Panc1 (cell line): ENCODE measurements at regions of chr17 and their contacts with region 1.

Region 1: DNA sequence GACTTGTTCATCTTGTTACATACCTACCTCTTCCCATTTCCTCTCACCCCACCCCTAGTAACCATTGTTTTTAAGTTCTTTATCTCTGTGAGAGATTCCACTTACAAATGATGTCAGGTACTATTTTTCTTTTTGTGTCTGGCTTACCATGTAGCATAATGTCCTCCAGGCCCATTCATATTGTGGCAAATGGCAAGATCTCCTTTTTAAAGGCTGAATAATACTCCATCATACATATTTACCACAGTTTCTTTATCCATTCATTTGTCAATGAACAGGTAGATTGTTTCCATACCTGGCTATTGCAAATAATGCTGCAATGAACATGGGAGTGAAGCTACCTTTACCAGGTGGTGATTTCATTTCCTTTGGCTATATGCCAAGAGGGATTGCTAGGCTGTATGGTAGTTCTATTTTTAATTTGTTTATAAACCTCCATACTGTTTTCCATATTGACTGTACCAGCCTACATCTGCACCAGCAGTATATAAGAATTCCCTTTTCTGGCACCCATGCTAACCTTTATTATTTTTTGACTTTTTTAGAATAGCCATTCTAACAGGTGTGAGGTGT is 53.9 kb downstream of the NSRP1 start:
- DNase-seq: no peak
- ATAC-seq: no peak
- H3K4me3 ChIP-seq: no peak overlapping the region
- H3K27ac ChIP-seq: no peak overlapping the region
- H3K4me1 ChIP-seq: no peaks in the 10 kb centered on the region
- H3K27me3 ChIP-seq: no peaks in the 10 kb centered on the region
- CTCF ChIP-seq: no peak

Region 2: DNA sequence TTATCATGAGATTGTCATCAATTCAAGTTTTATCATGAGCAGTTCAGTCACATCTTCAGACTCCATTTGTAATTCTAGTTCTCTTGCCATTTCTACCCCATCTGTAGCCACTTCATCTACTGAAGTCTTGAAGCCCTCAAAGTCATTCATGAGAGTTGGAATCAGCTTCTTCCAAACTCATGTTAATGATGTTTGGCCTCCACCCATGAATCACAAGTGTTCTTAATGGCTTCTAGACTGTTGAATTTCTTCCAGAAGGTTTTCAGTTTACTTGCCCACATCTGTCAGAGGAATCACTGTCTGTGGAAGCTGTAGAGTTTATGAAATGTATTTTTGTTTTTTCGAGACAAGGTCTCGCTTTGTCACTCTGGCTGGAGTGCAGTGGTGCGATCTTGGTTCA is 37.9 kb before region 1 on chr17:
- CTCF ChIA-PET with region 1: interaction called, 14 read pairs
- POLR2A ChIA-PET with region 1: no interaction called
- in situ Hi-C with region 1: no loop called
- intact Hi-C with region 1: no loop called
- DNase-seq: no peak
- ATAC-seq: no peak
- H3K4me3 ChIP-seq: no peak overlapping the region
- H3K27ac ChIP-seq: no peak overlapping the region
- H3K4me1 ChIP-seq: no peaks in the 10 kb centered on the region
- H3K27me3 ChIP-seq: no peaks in the 10 kb centered on the region
- CTCF ChIP-seq: no peak

Region 3: DNA sequence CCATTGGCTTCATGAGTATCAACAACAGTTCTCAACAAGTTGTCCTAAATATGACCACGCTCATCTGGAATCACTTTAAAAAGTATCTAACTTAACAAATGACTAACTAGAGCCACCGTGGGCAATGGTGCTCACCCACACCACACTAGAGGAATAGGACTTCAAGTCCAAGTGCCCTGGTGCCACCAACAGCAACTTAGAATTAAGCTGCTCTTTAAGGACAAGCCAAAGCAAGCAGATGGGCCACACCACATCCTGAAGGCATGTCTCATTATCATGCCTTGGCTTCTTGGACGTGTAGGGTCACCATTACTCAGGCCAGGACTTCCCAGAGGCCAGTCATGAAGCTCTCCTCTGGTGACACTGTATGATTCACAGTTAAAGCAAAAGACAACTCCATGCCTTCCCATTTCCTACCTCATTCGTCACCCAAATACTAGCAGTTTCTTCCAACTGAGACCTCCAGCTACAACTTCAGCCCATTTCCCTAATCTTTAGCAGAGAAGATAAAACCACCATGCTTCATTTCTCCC is 74.4 kb after region 1 on chr17:
- CTCF ChIA-PET with region 1: no interaction called
- POLR2A ChIA-PET with region 1: no interaction called
- in situ Hi-C with region 1: no loop called
- intact Hi-C with region 1: no loop called
- DNase-seq: no peak
- ATAC-seq: no peak
- H3K4me3 ChIP-seq: no peak overlapping the region
- H3K27ac ChIP-seq: no peak overlapping the region
- H3K4me1 ChIP-seq: no peaks in the 10 kb centered on the region
- H3K27me3 ChIP-seq: no peaks in the 10 kb centered on the region
- CTCF ChIP-seq: no peak